ENCODE measurements at regions of chr1 and their contacts with region 1.

Region 1: DNA sequence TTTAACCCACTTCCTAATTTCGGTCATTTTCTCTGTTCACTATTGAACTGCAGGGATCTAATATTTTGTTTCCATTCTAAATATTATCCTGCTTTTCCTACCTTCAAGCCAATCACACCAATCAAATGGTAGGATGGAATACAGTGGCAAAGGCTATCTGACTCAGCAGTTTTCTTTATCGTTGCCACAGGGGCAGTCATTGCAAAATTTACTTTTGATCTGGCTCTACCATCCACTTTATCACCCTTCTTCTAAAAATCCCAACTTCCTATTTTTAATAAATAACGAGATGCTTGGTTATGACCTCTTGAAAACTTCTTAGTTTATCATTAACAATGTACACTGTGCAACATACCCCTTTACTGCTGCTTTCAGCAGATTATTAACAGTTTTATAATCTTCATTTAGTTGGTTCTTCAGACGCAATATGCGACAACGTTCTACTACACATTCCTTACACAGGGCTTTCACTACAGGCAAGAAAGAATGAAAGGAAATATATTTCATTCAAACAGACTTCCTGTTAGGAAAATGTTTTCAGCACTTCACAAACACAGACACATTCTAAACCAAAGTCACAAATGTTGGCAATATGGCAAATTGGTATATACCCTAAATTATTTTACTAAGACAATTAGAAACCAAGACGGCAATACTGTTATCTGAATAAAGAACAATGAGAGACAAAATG is 52.3 kb upstream of the RAP1GAP start:
- DNase-seq: no peak
- H3K4me3 ChIP-seq: no peak overlapping the region
- H3K27ac ChIP-seq: no peak overlapping the region
- H3K4me1 ChIP-seq: no peaks in the 10 kb centered on the region
- H3K27me3 ChIP-seq: no peaks in the 10 kb centered on the region
- CTCF ChIP-seq: no peak

Region 2: DNA sequence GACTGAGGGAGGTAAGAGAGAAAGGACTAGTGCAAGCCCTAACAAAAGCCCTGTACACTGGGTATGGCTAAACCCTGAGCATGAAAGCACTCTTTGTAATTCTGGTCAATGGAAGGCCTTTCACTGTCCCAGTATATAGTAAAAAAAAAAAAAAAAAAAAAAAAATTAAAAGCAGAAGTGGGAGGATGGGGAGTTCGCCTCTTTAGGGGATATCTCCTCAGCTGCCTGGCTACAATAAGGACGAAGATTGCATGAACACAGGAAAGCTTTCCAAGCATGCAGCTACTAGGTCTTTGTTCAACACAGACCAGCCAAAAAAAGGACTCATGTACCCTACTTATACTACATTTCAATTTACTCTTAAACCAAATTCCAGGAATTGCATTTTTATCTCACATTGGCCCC is 603.8 kb before region 1 on chr1:
- CTCF ChIA-PET with region 1: no interaction called
- POLR2A ChIA-PET with region 1: interaction called, 25 read pairs
- intact Hi-C with region 1: no loop called
- DNase-seq: no peak
- H3K4me3 ChIP-seq: no peak overlapping the region
- H3K27ac ChIP-seq: no peak overlapping the region
- H3K4me1 ChIP-seq: no peaks in the 10 kb centered on the region
- H3K27me3 ChIP-seq: no peaks in the 10 kb centered on the region
- CTCF ChIP-seq: no peak

Region 3: DNA sequence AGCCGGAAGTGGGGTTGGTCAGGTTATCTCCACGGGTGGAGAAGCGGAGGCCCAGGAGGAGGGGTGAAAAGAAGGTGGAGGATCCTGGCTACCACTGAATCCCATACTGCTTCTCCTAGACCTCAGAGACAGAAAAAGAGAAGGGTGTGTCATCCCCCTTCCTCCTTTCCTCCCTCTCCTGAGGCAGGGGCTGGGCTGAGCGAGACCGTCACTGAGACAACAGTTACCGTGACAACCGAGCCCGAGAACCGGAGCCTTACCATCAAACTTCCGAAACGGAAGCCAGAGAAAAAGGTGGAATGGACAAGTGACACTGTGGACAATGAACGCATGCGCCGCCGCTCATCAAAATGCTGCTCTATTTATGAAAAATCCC is 323.6 kb before region 1 on chr1:
- CTCF ChIA-PET with region 1: no interaction called
- POLR2A ChIA-PET with region 1: no interaction called
- intact Hi-C with region 1: no loop called
- DNase-seq: no peak
- H3K4me3 ChIP-seq: no peak overlapping the region
- H3K27ac ChIP-seq: no peak overlapping the region
- H3K4me1 ChIP-seq: peaks cover 16% of the 10 kb centered on the region
- H3K27me3 ChIP-seq: no peaks in the 10 kb centered on the region
- CTCF ChIP-seq: no peak

Region 4: DNA sequence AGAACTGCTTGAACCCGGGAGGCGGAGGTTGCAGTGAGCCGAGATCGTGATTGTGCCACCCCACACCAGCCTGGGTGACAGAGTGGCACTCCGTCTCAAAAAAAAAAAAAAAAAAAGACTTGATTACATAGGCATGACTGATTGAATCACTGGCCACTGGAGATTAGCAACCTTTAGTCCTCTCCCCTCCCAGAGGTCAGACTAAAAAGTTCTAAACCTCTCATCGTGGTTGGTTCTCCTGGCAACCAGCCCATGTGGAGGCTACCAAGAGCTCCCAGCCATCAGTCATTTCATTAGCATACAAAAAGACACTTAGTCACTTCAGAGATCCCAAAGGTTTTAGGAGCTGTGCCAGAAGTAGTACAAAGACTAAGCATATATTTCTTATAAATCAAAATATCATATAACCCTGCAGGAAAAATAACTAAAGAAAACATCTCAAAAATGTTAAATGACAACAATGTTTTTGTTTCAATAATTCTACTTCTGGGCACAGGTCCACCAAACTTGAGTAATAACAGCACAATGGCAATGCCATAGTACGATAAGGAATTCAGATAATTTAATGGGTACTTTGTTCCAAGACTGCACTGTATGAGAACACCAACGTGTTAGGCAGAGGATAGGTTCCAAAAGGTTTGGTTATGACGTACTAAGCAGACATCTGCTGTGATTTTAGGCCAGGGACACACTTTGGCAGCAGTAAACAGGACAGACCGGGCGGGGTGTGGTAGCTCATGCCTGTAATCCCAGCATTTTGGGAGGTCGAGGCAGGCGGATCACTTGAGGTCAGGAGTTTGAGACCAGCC is 43.4 kb after region 1 on chr1:
- CTCF ChIA-PET with region 1: interaction called, 11 read pairs
- POLR2A ChIA-PET with region 1: no interaction called
- intact Hi-C with region 1: no loop called
- DNase-seq: peak; percentile 88 to 96
- H3K4me3 ChIP-seq: no peak overlapping the region
- H3K27ac ChIP-seq: peak overlapping the region; percentile 60
- H3K4me1 ChIP-seq: peaks cover 26% of the 10 kb centered on the region
- H3K27me3 ChIP-seq: no peaks in the 10 kb centered on the region
- CTCF ChIP-seq: no peak

Region 5: DNA sequence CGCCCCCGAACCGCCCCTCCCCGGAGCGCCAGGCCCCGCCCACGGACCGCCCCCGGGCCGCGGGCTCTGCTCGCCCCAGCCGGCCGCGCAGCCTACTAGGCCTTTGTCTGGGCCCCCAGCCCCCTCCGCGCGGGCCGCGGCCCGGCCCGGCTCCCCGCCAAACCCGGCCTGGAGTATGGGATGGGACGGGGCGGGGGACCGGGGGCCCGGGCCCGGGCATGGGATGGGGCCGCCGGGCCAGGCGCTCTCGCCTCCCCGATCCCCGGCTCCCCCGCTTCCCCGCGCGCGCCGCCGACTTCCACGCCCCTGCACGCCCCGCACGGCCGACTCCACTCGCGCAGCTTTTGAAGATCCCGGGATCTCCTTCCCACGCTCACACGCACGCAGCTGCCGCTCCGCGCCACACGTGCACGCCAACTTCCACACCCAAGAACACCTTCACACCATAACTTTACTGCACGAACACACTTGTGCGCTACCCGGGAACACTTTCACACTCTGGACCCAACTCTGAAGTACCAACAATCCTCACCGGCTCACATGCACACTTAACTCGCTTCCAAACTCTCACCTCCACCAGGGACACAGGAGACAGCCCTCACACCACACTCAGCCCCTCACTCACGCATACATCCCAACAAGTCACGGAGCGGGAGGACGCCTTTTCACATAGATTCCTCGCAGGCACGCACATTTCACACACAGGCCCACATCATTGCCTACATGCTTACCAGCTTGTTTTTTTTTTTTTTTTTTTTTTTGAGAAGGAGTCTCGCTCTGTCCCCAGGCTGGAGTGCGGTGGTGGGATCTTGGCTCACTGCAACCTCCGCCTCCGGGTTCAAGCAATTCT is 216.2 kb after region 1 on chr1:
- CTCF ChIA-PET with region 1: no interaction called
- POLR2A ChIA-PET with region 1: interaction called, 20 read pairs
- intact Hi-C with region 1: no loop called
- DNase-seq: peak in 1 of 2 experiments; percentile 74
- H3K4me3 ChIP-seq: peak overlapping the region; percentile 46; the same call in 1 of the 2 replicates
- H3K27ac ChIP-seq: no peak overlapping the region
- H3K4me1 ChIP-seq: peaks cover 44% of the 10 kb centered on the region
- H3K27me3 ChIP-seq: no peaks in the 10 kb centered on the region
- CTCF ChIP-seq: no peak